GM13976 (cell line): ENCODE measurements at regions of chr7 and their contacts with region 1.

Region 1: DNA sequence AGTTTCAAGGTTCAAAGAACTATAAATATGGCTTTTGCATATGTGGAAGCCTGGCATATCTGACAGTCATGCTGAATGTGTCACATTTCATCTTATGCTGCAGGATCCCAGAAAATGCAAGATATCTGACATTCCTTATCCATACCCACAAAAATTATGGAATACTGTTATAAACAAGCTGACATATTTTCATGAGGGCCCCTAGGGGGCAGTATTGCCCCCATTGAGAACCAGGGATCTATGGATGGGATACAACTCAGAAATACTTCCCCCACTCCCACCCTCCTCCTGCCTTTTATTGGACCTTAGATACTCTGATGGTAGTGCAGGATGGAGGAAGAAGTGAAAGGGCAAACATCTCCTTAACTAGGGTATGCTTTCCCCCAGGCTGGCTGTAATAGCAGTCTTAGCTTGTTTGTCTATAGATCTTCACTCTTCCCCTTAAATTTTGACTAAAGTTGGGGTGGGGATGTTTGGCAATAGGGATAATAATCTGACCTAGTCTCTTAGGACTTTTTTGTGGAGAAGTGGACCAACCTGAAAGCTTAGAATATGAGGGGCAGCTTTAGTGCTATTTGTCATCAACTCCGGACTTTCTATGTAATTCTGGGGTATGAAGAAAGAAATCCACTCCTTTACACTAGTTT is 3.5 kb upstream of the GNGT1 start:
- DNase-seq: no peak
- CTCF ChIP-seq: peak; percentile 44

Region 2: GRCh38 chr7:93622036-93623033 is 280.6 kb before region 1 on chr7:
- in situ Hi-C with region 1: no loop called
- DNase-seq: no peak
- CTCF ChIP-seq: no peak

Region 3: DNA sequence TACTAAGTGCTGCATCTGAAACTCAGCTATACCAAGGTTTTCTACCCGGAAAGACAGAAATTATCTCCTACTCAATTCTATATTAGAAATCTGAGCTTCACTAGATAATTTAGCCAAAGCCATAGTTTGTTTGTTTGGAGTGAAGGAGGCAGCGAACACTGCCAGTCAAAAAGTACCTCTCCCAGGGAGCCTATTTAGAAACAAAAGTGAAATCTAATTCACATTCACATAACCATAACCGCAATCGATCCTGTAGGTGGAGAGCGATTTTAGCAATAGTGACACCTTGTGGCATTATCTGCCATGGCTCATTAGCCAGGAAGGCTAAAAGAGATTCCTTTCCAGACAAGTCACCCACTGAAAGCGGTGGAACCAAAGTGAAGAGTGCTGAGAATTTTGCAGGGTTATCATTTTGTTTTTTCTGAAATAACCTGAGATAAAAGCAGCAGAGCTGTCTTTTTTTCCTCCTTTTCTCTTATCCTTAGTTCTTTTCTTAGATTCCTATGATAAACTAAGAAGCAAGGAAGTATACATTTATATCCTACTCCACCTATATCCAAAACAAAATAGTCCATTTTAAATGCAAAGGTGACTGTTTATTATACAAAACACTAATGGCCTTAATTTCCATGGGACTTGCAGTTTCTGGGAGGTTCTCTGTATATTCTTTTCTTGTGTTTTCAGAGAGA is 184.9 kb after region 1 on chr7:
- in situ Hi-C with region 1: loop called (anchors 5 kb)
- DNase-seq: peak; percentile 71
- CTCF ChIP-seq: peak; percentile 61